Sigmoid colon (tissue), 7 donors: ENCODE measurements at regions of chr16 and their contacts with region 1.

Region 1: DNA sequence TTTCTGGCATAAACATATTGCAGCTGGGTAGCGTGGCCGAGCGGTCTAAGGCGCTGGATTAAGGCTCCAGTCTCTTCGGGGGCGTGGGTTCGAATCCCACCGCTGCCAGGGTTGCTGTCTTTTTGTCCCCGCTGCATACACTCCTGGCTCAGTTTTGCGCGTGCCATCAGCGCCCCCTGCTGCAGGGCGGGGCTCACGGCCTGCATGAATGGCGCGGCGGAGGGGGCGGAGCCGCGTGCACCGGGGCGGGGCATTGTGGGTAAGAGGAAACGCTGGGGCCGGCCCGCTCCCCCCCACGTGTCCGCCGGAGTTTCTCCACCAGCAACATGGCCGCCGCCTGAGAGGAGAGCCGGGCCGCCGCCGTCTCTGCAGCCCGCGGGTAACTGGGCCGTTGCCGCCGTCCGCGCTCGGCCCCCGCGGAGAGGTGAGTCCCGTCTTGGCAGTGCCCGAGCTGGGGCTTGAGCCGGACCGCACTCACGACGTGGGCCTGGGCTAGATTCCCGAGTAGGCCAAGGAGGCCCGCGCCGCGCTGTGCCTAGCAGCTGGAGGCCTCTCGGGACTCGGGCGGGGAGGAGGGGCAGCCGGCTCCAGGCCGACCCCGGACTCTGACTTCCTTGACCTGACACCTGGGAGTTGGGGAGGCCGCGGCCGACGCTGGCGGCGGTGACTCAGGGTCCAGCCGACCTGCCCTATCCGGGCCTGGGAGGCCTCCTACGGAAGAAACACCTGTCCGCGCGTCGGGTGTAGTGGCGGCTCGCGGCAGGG is at the start of gene POLR3E:
- DNase-seq: peak; percentile 99
- H3K4me3 ChIP-seq: peak within 1 kb of the TSS; percentile 65 to 98 (median 83)
- H3K27ac ChIP-seq: peak within 1 kb of the TSS; percentile 93 to 96 (median 95)
- H3K4me1 ChIP-seq: peaks cover 0 to 39% (median 26%) of the 10 kb centered on the region in 4 donors
- H3K27me3 ChIP-seq: no peaks in the 10 kb centered on the region
- CTCF ChIP-seq: peak; percentile 87 to 97 (median 91)
- EP300 ChIP-seq: peak in 1 of 4 donors; percentile 44
- POLR2A ChIP-seq: no peak
- total RNA-seq, gene POLR3E: 39.3 to 68.7 (median 49.4) TPM

Region 2: GRCh38 chr16:21952793-21953540 is 344.3 kb before region 1 on chr16 and contains the start of gene UQCRC2:
- intact Hi-C with region 1: loop called (anchors 5 kb)
- DNase-seq: peak; percentile 93
- H3K4me3 ChIP-seq: peak within 1 kb of the TSS; percentile 78 to 91 (median 82)
- H3K27ac ChIP-seq: peak within 1 kb of the TSS; percentile 88 to 95 (median 90)
- H3K4me1 ChIP-seq: peaks cover 0 to 44% (median 36%) of the 10 kb centered on the region in 4 donors
- H3K27me3 ChIP-seq: no peaks in the 10 kb centered on the region
- CTCF ChIP-seq: no peak
- EP300 ChIP-seq: no peak
- POLR2A ChIP-seq: peak; percentile 59 to 90
- total RNA-seq, gene UQCRC2: 179 to 220 (median 205) TPM

Region 3: DNA sequence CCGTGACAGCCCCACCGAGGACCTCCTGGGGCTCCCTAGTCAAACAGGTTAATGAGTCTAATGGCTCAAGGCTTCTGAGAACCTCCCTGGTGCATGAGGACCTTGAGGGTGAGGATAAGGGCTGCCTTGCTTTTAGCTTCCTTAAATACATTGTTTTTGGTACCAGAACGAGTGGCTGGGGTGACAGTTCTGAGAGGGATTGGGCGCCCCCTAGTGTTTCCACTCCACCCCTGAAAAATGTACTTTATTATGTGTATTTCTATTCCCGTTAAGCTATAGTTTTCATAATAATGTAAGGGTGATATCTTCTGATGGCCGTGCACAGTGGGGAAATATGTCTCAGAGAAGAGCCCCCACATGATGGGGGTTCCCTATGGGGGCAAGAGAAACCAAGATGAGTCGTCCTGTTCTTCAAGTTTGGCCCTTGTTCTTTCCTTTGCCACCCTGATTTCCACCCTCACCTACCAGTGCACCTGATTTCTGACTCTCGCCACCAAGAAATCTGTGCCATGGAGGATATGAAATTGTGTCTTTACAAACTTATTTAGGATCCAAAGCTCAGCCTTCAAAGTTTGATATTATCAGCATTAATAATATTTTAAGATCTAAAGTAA is 219.5 kb before region 1 on chr16:
- intact Hi-C with region 1: loop called (anchors 5 kb)
- DNase-seq: no peak
- H3K4me3 ChIP-seq: no peak overlapping the region
- H3K27ac ChIP-seq: no peak overlapping the region
- H3K4me1 ChIP-seq: peaks cover 0 to 5% (median 2%) of the 10 kb centered on the region in 4 donors
- H3K27me3 ChIP-seq: no peaks in the 10 kb centered on the region
- CTCF ChIP-seq: peak in 3 of 4 experiments; percentile 58 to 71 (median 66)
- EP300 ChIP-seq: no peak
- POLR2A ChIP-seq: no peak

Region 4: DNA sequence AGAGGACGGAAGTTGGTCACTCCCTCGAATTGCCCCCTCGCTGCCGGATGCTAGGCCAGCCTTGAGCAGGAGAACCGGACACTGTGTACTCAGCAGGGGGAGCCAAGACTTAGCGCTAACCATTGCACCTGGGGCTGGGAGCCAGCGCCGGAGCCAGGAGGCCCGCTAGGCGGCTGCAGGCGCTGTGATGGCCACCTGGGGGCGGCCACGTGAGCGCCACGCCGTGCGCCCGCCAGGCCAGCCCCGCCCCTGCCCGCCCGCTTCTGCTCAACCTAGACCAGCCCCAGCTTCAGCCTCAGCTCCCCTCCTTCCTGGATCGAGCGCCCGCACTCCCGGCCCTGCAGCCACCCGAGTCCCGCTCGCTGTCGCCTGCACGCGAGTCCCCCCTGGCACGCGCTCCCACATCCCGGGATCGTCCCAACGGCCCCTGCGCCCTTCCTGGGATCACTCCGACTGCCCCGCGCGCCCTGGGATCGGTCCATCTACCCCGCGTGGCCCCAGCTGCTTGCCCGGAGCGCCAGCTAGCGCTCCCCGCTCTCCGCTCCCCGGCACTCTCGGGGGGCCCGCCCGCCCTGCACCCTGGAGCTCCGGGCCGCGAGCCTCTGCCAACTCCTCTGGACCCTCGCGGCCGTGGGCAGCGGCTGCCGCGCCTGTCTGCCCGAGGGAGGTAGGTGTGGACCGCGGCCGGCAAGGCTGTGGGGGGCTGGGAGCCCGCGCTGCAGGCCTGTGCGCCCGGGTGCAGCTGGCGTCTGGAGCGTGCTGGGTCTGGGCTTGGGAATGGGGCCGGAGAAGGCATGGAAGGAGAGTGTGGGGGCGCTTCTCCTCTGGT is 91.1 kb before region 1 on chr16 and contains the start of gene EEF2K:
- intact Hi-C with region 1: loop called (anchors 1 kb)
- DNase-seq: peak; percentile 98
- H3K4me3 ChIP-seq: peak within 1 kb of the TSS; percentile 72 to 99 (median 98)
- H3K27ac ChIP-seq: peak within 1 kb of the TSS; percentile 94 to 98 (median 96)
- H3K4me1 ChIP-seq: peaks cover 0 to 49% (median 43%) of the 10 kb centered on the region in 4 donors
- H3K27me3 ChIP-seq: no peaks in the 10 kb centered on the region
- CTCF ChIP-seq: peak; percentile 80 to 89 (median 85)
- EP300 ChIP-seq: peak in 2 of 4 donors; percentile 24 to 46
- POLR2A ChIP-seq: peak; percentile 41 to 45
- total RNA-seq, gene EEF2K: 37.2 to 54.8 (median 44.2) TPM

Region 5: GRCh38 chr16:22321339-22322001 is 24.2 kb after region 1 on chr16:
- intact Hi-C with region 1: no loop called
- DNase-seq: peak; percentile 86
- H3K4me3 ChIP-seq: no peak overlapping the region
- H3K27ac ChIP-seq: no peak overlapping the region
- H3K4me1 ChIP-seq: peaks cover 0 to 6% (median 2%) of the 10 kb centered on the region in 4 donors
- H3K27me3 ChIP-seq: no peaks in the 10 kb centered on the region
- CTCF ChIP-seq: peak; percentile 90 to 95 (median 91)
- EP300 ChIP-seq: no peak
- POLR2A ChIP-seq: no peak

Region 6: DNA sequence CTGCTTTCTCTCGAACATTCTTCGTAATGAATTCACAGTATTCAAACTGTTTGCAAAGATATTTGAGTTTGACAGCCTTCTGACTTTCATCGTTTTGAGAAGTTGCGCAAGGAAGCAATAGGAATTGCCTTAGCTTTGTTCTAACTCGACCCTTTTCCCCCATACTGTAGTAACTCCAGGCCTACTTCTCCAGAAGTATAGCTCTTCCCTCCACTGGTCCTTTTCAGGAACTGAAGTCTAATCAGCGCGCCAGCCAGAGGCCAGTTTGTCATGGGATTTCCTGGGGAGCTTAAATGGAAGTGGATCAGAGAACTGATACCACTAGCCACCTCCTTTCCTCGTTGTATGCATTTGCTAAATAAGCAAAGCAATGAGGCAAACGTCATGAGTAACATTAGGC is 49.2 kb after region 1 on chr16:
- intact Hi-C with region 1: loop called (anchors 5 kb)
- DNase-seq: no peak
- H3K4me3 ChIP-seq: no peak overlapping the region
- H3K27ac ChIP-seq: peak overlapping the region; percentile 41 to 85 (median 78)
- H3K4me1 ChIP-seq: peaks cover 0 to 35% (median 23%) of the 10 kb centered on the region in 4 donors
- H3K27me3 ChIP-seq: no peaks in the 10 kb centered on the region
- CTCF ChIP-seq: no peak
- EP300 ChIP-seq: no peak
- POLR2A ChIP-seq: no peak

Region 7: GRCh38 chr16:22369221-22369811 is 72.0 kb after region 1 on chr16:
- intact Hi-C with region 1: no loop called
- DNase-seq: no peak
- H3K4me3 ChIP-seq: no peak overlapping the region
- H3K27ac ChIP-seq: peak overlapping the region; percentile 91 to 95 (median 94)
- H3K4me1 ChIP-seq: peaks cover 0 to 80% (median 73%) of the 10 kb centered on the region in 4 donors
- H3K27me3 ChIP-seq: no peaks in the 10 kb centered on the region
- CTCF ChIP-seq: no peak
- EP300 ChIP-seq: no peak
- POLR2A ChIP-seq: no peak